ENCODE measurements at regions of chr12 and their contacts with region 1.

Region 1: DNA sequence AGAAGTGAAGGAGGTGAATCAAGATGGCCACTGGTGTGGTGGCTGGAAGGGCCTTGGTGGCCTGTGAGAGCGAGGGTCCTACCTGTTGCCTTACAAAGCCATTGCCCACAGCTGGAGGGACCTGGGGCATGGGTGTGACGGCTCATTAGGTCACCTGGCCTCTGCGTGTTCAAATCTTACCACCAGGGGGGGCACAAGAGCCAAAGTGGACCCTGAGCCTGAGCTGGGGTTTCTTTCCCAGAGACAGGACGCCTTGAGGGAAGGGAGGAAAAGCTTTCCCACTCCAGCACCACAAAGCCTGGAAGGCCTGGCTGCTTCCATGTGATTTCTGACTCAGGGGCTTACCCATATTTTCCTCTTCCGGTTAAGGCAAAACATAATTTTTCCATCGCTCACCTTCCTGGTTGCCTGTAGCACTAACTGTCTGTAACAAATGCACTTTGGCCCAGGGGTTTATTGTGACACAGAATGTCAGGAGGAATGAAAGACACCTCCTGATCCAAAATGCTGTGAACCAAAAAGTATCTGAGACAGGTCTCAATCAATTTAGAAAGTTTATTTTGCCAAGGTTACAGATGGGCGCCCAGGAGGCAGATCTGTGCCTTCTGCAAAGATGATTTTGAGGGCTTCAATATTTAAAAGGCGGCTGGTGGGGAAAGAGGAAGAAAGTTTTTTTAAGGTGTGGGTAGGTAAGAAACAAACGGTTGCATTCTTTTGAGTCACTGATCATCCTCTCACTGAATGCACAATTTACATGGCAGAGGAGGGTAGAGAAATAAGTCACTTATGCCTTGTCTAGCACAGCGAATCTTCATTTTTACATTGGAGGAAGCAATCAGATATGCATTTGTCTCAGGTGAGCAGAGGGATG is 4.3 kb upstream of the CD9 start:
- DNase-seq: peak; percentile 61
- H3K4me3 Mint-ChIP-seq: no peak overlapping the region
- H3K27ac Mint-ChIP-seq: peak overlapping the region; percentile 32
- H3K4me1 Mint-ChIP-seq: peaks cover 26% of the 10 kb centered on the region
- H3K27me3 Mint-ChIP-seq: peaks cover 20% of the 10 kb centered on the region

Region 2: DNA sequence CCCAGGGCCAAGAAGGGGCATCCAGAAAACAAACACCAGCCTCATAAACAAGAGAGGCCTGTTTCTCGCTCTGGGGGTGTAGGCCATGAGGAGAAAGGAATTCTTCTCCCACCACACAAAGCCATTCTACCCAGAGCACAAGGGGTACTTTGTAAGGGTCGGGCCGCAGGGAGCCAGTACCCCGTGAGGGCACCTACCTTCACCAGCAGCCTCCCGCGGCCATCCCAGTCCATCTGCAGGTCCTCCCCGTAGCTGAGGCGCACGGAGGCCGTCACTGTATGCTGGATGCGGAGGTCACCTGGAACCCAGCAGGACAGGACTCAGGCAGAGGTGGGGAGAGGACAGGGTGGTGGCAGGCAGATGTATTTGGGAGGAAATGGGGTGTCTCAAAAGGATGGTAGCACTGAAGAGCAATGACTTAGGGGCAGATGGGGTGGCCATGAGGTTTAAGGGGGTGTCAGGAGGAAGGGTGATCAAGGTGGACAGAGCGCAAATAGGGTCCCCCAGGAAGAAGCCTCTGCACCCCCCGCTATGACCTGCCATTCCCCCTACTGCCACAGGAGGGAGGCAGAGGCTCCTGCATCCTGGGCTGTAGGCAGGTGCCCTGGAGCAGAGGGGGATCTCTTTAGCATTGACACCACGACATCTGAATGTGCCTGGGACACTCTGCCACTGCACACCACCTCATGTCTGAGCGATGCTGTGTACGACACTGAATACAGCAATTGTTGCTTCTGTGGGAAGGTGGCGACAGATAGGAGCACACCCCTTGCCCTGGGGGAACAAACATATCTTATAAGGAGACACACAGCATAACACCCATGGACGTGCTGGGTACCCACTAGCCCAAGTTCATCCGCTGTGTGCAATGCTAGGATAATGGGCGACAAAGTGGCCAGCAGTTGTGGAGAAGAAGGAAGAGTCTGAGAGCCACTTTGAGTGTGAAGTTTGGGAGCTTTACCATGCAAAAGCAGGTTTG is 132.9 kb before region 1 on chr12:
- intact Hi-C with region 1: loop called (anchors 1 kb)
- DNase-seq: peak; percentile 17
- H3K4me3 Mint-ChIP-seq: no peak overlapping the region
- H3K27ac Mint-ChIP-seq: no peak overlapping the region
- H3K4me1 Mint-ChIP-seq: peaks cover 4% of the 10 kb centered on the region
- H3K27me3 Mint-ChIP-seq: peaks cover 2% of the 10 kb centered on the region

Region 3: GRCh38 chr12:6215932-6216494 is 20.1 kb after region 1 on chr12:
- intact Hi-C with region 1: loop called (anchors 1 kb)
- DNase-seq: no peak
- H3K4me3 Mint-ChIP-seq: peak overlapping the region; percentile 0
- H3K27ac Mint-ChIP-seq: peak overlapping the region; percentile 86
- H3K4me1 Mint-ChIP-seq: peaks cover 57% of the 10 kb centered on the region
- H3K27me3 Mint-ChIP-seq: peaks cover 4% of the 10 kb centered on the region

Region 4: DNA sequence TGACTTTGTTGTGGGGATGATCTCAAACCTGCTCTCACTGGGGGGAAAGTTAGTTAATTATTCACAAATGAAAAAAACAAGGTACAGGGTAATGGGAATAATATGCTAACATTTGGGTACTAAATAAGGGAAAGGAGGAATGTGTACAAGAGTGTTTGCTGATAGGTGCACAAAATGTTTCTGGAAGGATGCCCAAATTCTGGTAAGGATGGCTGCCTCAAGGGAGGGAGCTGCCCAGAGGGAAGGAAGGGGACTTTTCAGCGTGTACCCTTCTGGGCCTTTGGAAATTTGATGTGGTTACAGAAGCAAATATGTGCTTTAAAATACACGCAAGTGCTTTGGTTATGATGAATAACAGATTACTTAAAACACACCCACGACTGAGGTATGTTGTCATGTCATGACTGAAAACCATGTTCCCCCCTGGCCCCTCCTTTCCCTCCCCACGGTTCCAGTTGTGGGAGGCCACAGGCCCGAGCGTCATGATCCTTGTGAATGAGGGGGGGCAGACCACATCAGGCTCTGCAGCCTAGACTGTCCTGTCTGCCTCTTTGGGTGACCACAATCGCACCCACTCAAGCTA is 71.3 kb after region 1 on chr12:
- intact Hi-C with region 1: loop called (anchors 2 kb)
- DNase-seq: no peak
- H3K4me3 Mint-ChIP-seq: no peak overlapping the region
- H3K27ac Mint-ChIP-seq: peak overlapping the region; percentile 82
- H3K4me1 Mint-ChIP-seq: peaks cover 24% of the 10 kb centered on the region
- H3K27me3 Mint-ChIP-seq: peaks cover 2% of the 10 kb centered on the region

Region 5: DNA sequence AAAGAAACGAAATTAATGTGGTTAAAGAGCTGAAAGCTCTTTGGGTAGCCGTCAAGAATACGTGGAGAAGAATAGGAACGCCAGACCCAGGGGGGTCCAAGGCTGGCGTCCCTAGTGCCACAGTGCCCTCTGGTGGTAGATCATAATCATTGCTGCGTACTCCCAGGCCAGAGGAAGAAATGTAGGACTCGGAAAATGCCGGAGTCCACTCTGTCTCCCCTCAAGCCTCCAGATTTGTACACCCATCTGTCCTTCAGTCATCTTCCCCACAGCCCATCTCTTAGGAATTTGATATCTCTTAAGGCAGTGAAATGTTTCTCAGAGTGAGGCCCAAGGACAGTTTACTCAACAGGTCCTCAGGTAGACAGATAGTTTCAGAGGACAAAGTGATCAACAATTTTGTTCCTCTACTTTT is 89.2 kb after region 1 on chr12:
- intact Hi-C with region 1: loop called (anchors 1 kb)
- DNase-seq: peak; percentile 42
- H3K4me3 Mint-ChIP-seq: no peak overlapping the region
- H3K27ac Mint-ChIP-seq: no peak overlapping the region
- H3K4me1 Mint-ChIP-seq: no peaks in the 10 kb centered on the region
- H3K27me3 Mint-ChIP-seq: peaks cover 11% of the 10 kb centered on the region

Region 6: DNA sequence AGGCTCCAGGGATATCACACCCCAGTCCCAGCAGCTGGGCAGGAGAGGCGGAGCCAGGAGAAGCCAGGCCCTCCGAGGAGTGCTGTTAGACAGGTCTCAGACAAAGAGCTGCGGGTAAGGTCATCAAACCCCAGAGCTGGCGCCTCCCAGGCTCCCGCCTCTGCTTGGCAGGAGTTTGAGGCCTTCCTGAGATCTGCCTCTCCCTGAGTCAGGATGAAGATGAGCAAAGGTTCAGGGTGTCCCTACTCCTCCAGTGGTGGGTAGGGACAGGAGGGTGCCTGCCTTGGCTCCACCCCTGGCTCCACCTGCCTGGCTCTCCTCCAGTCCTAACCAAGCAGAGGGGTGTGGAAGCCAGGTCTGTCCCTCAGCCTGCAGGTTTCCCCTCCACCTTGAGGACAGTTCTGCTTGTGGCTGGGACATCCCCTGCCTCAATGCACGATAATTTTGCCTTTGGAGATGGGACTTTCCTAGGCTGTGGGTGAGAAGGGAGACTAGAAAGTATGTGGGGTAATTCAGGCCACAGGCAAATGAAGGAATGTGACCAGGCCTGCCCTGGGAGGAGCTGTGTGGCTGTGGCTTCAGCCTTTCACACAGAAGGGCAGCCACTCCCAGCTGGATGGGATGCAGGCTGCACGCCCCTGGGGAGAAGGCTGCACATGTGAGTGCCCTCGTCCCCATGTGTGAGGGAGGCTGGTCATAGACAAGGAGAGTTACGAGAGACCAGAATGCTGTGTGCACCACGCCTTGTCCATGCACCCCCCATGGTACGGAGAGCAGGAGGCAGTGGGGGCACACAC is 116.8 kb after region 1 on chr12:
- intact Hi-C with region 1: no loop called
- DNase-seq: peak; percentile 17
- H3K4me3 Mint-ChIP-seq: no peak overlapping the region
- H3K27ac Mint-ChIP-seq: no peak overlapping the region
- H3K4me1 Mint-ChIP-seq: peaks cover 14% of the 10 kb centered on the region
- H3K27me3 Mint-ChIP-seq: peaks cover 22% of the 10 kb centered on the region

Measured in activated T-helper 1 cell treated with anti-CD3 and anti-CD28 coated beads, Interleukin-12 subunit alpha, Interleukin-12 subunit beta, Interleukin-2, Interleukin-4 antibody, amounts not matched to agents 30 ng/mL and 10 ng/mL and 1 ng/mL, durations not matched to agents 14 hours and 24 hours and 36 hours (primary cell).